IMR-90 (cell line): ENCODE measurements at regions of chr2 and their contacts with region 1.

Region 1: GRCh38 chr2:3547915-3548314 is 10.2 kb downstream of the RNASEH1 start:
- DNase-seq: no peak
- ATAC-seq: no peak
- H3K4me3 ChIP-seq: no peak overlapping the region
- H3K27ac ChIP-seq: no peak overlapping the region
- H3K4me1 ChIP-seq: no peaks in the 10 kb centered on the region
- H3K27me3 ChIP-seq: no peaks in the 10 kb centered on the region
- CTCF ChIP-seq: no peak
- POLR2A ChIP-seq: no peak
- RAD21 ChIP-seq: no peak

Region 2: DNA sequence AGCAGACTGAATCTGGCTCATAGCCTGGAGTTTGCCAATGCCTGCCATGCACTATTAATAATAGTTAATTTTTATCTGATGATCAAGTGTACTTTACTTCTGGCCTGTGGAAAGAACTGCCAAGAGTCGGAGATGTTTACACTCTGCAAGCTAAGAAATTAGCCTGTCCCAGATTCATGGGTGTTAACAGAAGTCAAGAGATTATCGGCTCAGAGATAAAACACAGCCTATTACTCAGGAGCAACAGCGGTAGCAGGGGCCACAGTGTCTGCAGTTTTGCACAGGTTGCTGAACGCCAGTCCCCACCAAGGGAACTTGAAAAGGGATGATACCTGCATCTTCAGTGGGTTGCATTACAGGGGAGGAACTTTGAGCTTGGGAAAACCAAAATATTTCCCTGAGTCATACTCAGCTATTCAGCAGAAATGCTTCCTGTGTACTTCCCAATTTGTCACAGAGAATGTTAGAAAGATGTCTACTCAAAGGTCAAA is 24.3 kb before region 1 on chr2:
- CTCF ChIA-PET with region 1: no interaction called
- POLR2A ChIA-PET with region 1: interaction called, 7 read pairs
- dilution Hi-C with region 1: no loop called
- in situ Hi-C with region 1: no loop called
- intact Hi-C with region 1: loop called (anchors 1 kb)
- DNase-seq: peak; percentile 49
- ATAC-seq: 0 out of 2 replicates have a peak, but pooled peaks have one; percentile 3
- H3K4me3 ChIP-seq: no peak overlapping the region
- H3K27ac ChIP-seq: peak overlapping the region; percentile 88; the same call in 1 of the 2 replicates
- H3K4me1 ChIP-seq: peaks cover 15% of the 10 kb centered on the region
- H3K27me3 ChIP-seq: no peaks in the 10 kb centered on the region
- CTCF ChIP-seq: no peak
- POLR2A ChIP-seq: no peak
- RAD21 ChIP-seq: no peak